Body of pancreas (tissue), 4 donors: ENCODE measurements at regions of chr17 and their contacts with region 1.

Region 1: DNA sequence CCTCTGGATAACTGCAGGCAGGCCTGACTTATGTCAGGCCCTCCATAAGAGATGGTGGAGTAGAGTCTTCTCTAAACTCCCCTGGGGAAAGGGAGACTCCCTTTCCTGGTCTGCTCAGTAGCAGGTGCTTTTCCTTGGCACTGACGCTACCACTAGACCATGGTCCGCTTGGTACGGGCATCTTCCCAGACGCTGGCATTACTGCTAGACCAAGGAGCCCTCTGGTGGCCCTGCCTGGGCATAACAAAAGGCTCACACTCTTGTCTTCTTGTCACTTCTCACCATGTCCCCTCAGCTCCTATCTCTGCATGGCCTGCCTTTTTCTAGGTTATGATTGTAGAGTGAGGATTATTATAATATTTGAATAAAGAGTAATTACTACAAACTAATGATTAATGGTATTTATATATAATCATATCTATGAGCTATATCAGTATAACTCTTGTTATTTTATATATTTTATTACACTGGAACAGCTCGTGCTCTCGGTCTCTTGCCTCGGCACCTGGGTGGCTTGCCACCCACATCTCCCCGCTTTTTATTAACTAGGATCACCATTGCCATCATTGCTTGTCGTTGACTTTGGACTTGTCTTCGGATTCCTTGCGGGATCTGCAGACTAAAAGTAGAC is 59.8 kb upstream of the ARL4D start:
- DNase-seq: peak; percentile 79 to 89 (median 80)
- ATAC-seq: peak; percentile 35
- H3K4me3 ChIP-seq: no peak overlapping the region
- H3K27ac ChIP-seq: no peak overlapping the region
- H3K4me1 ChIP-seq: peaks cover 2% of the 10 kb centered on the region
- H3K27me3 ChIP-seq: no peaks in the 10 kb centered on the region
- CTCF ChIP-seq: peak; percentile 55 to 70 (median 62)
- POLR2A ChIP-seq: no peak

Region 2: DNA sequence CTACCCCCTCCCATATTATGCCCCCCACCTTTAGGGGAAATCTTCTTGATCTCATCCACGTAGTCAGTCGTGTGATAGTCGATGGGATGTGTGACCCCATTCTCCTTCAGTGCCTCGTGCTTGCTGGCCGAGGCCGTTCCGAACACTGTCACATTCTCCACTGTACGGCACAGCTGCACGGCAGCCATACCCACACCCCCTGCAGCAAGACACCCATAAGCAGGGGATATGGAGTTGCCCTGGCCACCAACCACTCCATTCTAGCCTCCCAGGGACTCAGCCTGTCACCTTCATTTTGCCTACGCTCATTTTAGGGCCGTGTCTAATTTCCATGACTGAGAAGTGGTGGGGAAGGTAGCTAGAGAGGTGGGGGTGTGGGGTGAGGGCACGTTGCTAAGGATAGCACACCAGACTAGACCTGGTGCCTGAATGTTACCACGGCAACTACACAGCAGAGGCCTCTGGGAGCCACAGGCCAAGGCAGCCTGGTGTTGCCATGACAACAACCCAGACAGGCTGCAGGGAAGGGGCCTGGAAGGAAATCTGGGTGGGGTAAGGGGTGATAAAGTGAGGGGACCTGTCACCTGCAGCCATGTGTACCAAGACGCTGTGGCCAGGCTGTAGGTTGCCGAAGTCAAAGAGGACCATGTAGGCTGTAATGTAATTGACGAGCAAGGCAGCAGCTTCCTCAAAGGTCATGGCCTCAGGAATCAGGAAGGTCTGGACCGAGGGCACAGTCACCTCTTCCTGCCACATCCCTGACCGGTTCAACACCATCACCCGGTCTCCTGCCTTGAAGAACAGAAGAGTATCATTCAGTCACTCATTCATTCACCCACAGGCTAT is 320.8 kb before region 1 on chr17:
- intact Hi-C with region 1: loop called (anchors 10 kb)
- DNase-seq: peak in 3 of 4 donors; percentile 37 to 58 (median 48)
- ATAC-seq: no peak
- H3K4me3 ChIP-seq: no peak overlapping the region
- H3K27ac ChIP-seq: peak overlapping the region in 1 of 4 donors; percentile 36
- H3K4me1 ChIP-seq: peaks cover 23% of the 10 kb centered on the region
- H3K27me3 ChIP-seq: no peaks in the 10 kb centered on the region
- CTCF ChIP-seq: no peak
- POLR2A ChIP-seq: no peak

Region 3: GRCh38 chr17:43224146-43224695 is 114.8 kb before region 1 on chr17:
- intact Hi-C with region 1: loop called (anchors 10 kb)
- DNase-seq: peak in 1 of 4 donors; percentile 7
- ATAC-seq: no peak
- H3K4me3 ChIP-seq: no peak overlapping the region
- H3K27ac ChIP-seq: no peak overlapping the region
- H3K4me1 ChIP-seq: no peaks in the 10 kb centered on the region
- H3K27me3 ChIP-seq: no peaks in the 10 kb centered on the region
- CTCF ChIP-seq: no peak
- POLR2A ChIP-seq: no peak